ENCODE measurements at regions of chr14 and their contacts with region 1.

Region 1: GRCh38 chr14:52961060-52961639 is 10.3 kb upstream of the FERMT2 start:
- DNase-seq: peak; percentile 10 to 47 (median 24)
- ATAC-seq: peak; percentile 85
- H3K4me3 ChIP-seq: no peak overlapping the region
- H3K27ac ChIP-seq: no peak overlapping the region
- H3K4me1 ChIP-seq: no peaks in the 10 kb centered on the region
- H3K27me3 ChIP-seq: no peaks in the 10 kb centered on the region
- CTCF ChIP-seq: peak; percentile 50 to 65 (median 57); a peak in 5 of 6 replicates
- EP300 ChIP-seq: no peak
- POLR2A ChIP-seq: no peak
- RAD21 ChIP-seq: peak; percentile 78 to 88

Region 2: DNA sequence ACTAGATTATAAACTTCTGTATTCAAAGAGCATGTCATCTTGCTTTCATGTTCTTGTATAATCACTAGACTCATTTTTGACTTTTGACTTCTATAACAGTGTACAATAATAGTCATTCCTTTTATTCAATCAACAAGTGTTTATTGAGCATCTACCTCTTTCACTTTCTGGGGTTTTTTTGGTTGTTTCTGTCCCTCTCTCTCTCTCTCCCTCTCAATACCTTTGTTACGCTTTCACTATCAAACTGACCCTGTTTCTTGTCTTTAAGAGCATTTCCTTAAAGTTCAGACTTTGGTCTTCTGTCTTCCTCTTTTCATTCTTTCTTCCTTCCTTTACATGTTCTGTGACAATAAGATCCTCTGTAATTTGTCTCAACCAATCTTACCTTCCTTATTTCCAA is 359.0 kb before region 1 on chr14:
- CTCF ChIA-PET with region 1: no interaction called
- POLR2A ChIA-PET with region 1: no interaction called
- in situ Hi-C with region 1: no loop called
- intact Hi-C with region 1: loop called (anchors 10 kb)
- DNase-seq: no peak
- ATAC-seq: no peak
- H3K4me3 ChIP-seq: no peak overlapping the region
- H3K27ac ChIP-seq: no peak overlapping the region
- H3K4me1 ChIP-seq: no peaks in the 10 kb centered on the region
- H3K27me3 ChIP-seq: no peaks in the 10 kb centered on the region
- CTCF ChIP-seq: no peak
- EP300 ChIP-seq: no peak
- POLR2A ChIP-seq: no peak
- RAD21 ChIP-seq: no peak

Region 3: DNA sequence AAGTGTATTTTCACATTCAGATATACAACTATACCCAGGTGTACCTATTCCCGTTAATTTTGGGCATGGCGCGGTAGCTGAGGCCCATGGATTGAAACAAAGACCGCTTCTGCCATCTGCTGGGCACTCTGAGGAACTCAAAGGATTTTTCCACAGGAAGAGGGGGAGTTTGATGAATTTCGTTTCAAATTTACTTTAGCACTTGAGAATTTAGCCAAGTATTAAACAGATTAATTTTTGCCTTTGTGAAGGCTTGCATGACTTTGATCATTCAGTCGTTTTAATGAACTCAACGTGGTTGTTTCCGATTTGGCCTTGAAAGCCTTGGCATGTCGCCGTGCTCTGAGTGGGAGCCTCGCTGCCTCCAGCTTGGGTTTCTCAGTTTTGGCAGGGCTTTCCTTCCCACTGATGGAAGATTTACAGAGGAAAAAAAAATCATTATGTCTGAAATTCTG is 345.1 kb after region 1 on chr14:
- CTCF ChIA-PET with region 1: no interaction called
- POLR2A ChIA-PET with region 1: no interaction called
- in situ Hi-C with region 1: no loop called
- intact Hi-C with region 1: loop called (anchors 10 kb)
- DNase-seq: peak; percentile 28 to 35 (median 31)
- ATAC-seq: peak; percentile 74
- H3K4me3 ChIP-seq: no peak overlapping the region
- H3K27ac ChIP-seq: no peak overlapping the region
- H3K4me1 ChIP-seq: no peaks in the 10 kb centered on the region
- H3K27me3 ChIP-seq: no peaks in the 10 kb centered on the region
- CTCF ChIP-seq: peak; percentile 47 to 72 (median 70)
- EP300 ChIP-seq: no peak
- POLR2A ChIP-seq: no peak
- RAD21 ChIP-seq: peak; percentile 66 to 73